Stomach (tissue), 19 donors: ENCODE measurements at regions of chr22 and their contacts with region 1.

Region 1: GRCh38 chr22:41517172-41518047 is 26.9 kb downstream of the POLR3H start:
- DNase-seq: peak; percentile 84 to 86
- H3K4me3 ChIP-seq: no peak overlapping the region
- H3K27ac ChIP-seq: peak overlapping the region; percentile 20 to 74 (median 60)
- H3K4me1 ChIP-seq: peaks cover 14 to 29% (median 22%) of the 10 kb centered on the region in 4 donors
- H3K27me3 ChIP-seq: no peaks in the 10 kb centered on the region
- CTCF ChIP-seq: peak in 5 of 7 experiments; percentile 82 to 92 (median 85)
- EP300 ChIP-seq: no peak
- POLR2A ChIP-seq: no peak

Region 2: GRCh38 chr22:41403532-41404318 is 113.7 kb before region 1 on chr22:
- intact Hi-C with region 1: loop called (anchors 2 kb)
- DNase-seq: peak; percentile 95 to 96
- H3K4me3 ChIP-seq: no peak overlapping the region
- H3K27ac ChIP-seq: peak overlapping the region; percentile 9 to 86 (median 66)
- H3K4me1 ChIP-seq: peaks cover 20 to 40% (median 31%) of the 10 kb centered on the region in 4 donors
- H3K27me3 ChIP-seq: no peaks in the 10 kb centered on the region
- CTCF ChIP-seq: peak in 6 of 7 experiments; percentile 91 to 99 (median 94)
- EP300 ChIP-seq: peak; percentile 60
- POLR2A ChIP-seq: no peak

Region 3: GRCh38 chr22:41458161-41458728 is 59.2 kb before region 1 on chr22:
- intact Hi-C with region 1: loop called (anchors 10 kb)
- DNase-seq: no peak
- H3K4me3 ChIP-seq: no peak overlapping the region
- H3K27ac ChIP-seq: peak overlapping the region in 1 of 5 donors; percentile 10
- H3K4me1 ChIP-seq: peaks cover 0 to 5% (median 2%) of the 10 kb centered on the region in 4 donors
- H3K27me3 ChIP-seq: no peaks in the 10 kb centered on the region
- CTCF ChIP-seq: no peak
- EP300 ChIP-seq: no peak
- POLR2A ChIP-seq: no peak